Endothelial cell of umbilical vein (primary cell): ENCODE measurements at regions of chr12 and their contacts with region 1.

Region 1: GRCh38 chr12:14417715-14418114 is 52.2 kb downstream of the ATF7IP start:
- DNase-seq: peak; percentile 96
- H3K4me3 ChIP-seq: no peak overlapping the region
- H3K27ac ChIP-seq: peak overlapping the region; percentile 54
- H3K4me1 ChIP-seq: peaks cover 45% of the 10 kb centered on the region
- H3K27me3 ChIP-seq: no peaks in the 10 kb centered on the region
- CTCF ChIP-seq: no peak
- POLR2A ChIP-seq: no peak

Region 2: GRCh38 chr12:14185427-14186192 is 232.1 kb before region 1 on chr12:
- CTCF ChIA-PET with region 1: interaction called, 6 read pairs
- POLR2A ChIA-PET with region 1: no interaction called
- dilution Hi-C with region 1: no loop called
- intact Hi-C with region 1: loop called (anchors 1 kb)
- DNase-seq: peak; percentile 35
- H3K4me3 ChIP-seq: no peak overlapping the region
- H3K27ac ChIP-seq: no peak overlapping the region
- H3K4me1 ChIP-seq: no peaks in the 10 kb centered on the region
- H3K27me3 ChIP-seq: no peaks in the 10 kb centered on the region
- CTCF ChIP-seq: peak; percentile 50 to 72
- POLR2A ChIP-seq: no peak

Region 3: GRCh38 chr12:14257734-14258574 is 159.8 kb before region 1 on chr12:
- CTCF ChIA-PET with region 1: interaction called, 42 read pairs
- POLR2A ChIA-PET with region 1: interaction called, 10 read pairs
- dilution Hi-C with region 1: no loop called
- intact Hi-C with region 1: loop called (anchors 1 kb)
- DNase-seq: peak; percentile 99
- H3K4me3 ChIP-seq: no peak overlapping the region
- H3K27ac ChIP-seq: peak overlapping the region; percentile 87
- H3K4me1 ChIP-seq: peaks cover 46% of the 10 kb centered on the region
- H3K27me3 ChIP-seq: no peaks in the 10 kb centered on the region
- CTCF ChIP-seq: no peak
- POLR2A ChIP-seq: no peak

Region 4: GRCh38 chr12:14373217-14373616 is 44.5 kb before region 1 on chr12:
- CTCF ChIA-PET with region 1: interaction called, 26 read pairs
- POLR2A ChIA-PET with region 1: no interaction called
- dilution Hi-C with region 1: no loop called
- intact Hi-C with region 1: no loop called
- DNase-seq: peak; percentile 81
- H3K4me3 ChIP-seq: no peak overlapping the region
- H3K27ac ChIP-seq: peak overlapping the region; percentile 80
- H3K4me1 ChIP-seq: peaks cover 23% of the 10 kb centered on the region
- H3K27me3 ChIP-seq: no peaks in the 10 kb centered on the region
- CTCF ChIP-seq: no peak
- POLR2A ChIP-seq: no peak

Region 5: DNA sequence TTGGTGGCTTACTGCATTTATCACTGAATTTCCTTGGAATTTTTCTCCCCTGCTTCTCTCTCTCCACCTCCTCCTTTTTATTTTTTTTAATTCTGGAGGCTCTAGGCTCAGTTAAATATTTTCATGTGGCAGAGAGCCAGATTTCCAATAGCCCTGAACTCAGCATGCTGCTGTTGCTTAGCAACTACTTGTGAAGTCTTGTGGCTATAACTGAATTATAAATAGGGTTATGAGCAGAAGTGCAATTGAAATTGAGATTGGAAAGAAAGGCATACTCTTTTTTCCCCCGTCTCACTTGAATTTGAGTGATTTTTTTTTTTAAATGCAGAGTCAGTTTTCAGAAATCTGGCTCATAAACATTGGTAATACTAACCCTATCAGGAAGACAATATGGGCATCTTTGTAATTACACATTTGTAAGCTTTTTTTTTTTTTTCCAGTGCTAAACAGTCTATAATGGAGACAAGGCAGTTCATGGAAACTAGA is 14.0 kb before region 1 on chr12:
- CTCF ChIA-PET with region 1: interaction called, 7 read pairs
- POLR2A ChIA-PET with region 1: no interaction called
- dilution Hi-C with region 1: no loop called
- intact Hi-C with region 1: loop called (anchors 2 kb)
- DNase-seq: peak; percentile 77
- H3K4me3 ChIP-seq: no peak overlapping the region
- H3K27ac ChIP-seq: no peak overlapping the region
- H3K4me1 ChIP-seq: peaks cover 16% of the 10 kb centered on the region
- H3K27me3 ChIP-seq: no peaks in the 10 kb centered on the region
- CTCF ChIP-seq: no peak
- POLR2A ChIP-seq: no peak

Region 6: GRCh38 chr12:14577344-14577743 is 159.6 kb after region 1 on chr12:
- CTCF ChIA-PET with region 1: no interaction called
- POLR2A ChIA-PET with region 1: no interaction called
- dilution Hi-C with region 1: no loop called
- intact Hi-C with region 1: no loop called
- DNase-seq: no peak
- H3K4me3 ChIP-seq: no peak overlapping the region
- H3K27ac ChIP-seq: no peak overlapping the region
- H3K4me1 ChIP-seq: no peaks in the 10 kb centered on the region
- H3K27me3 ChIP-seq: no peaks in the 10 kb centered on the region
- CTCF ChIP-seq: no peak
- POLR2A ChIP-seq: no peak